HCT116 (cell line): ENCODE measurements at regions of chr2 and their contacts with region 1.

Region 1: DNA sequence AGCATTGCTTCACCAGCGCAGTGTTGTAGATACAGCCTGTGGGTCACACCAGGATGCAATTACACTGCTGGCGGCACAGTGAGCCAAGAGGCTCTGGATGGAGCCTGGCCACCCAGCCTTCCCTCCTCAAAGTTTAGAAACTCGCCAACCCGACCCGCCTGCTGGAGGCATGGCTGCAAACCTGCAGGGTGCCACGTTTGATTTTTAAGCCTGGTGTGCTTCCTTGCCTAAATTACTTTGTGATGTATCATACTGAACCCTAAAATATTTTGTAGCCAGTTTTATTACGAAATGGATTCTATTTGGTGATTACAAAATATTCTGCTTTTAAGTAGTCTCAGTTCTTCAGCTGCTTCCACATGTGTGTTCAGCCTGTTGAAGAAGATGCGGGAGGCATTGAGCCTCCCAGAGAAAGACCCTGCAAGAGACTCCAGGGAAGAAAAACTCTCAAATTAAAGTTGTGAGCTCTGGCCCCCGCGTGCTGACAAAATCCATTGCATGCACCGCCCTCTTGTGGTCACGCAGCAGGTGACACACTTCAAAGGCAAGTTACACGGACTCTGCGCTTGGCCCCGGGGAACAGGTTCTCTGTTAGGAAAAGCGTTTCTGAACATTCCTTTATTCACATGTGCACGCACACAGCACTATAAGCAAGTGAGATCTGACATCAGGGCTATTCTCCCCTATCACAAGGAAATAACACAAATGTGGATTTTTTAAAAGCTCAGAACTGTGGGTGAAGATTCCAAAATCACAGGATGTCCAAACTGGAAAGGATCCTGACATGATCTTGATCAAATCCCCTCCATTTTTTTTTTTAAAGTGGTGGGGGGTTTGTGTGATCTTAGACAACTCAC is 63.0 kb upstream of the TWIST2 start:
- DNase-seq: peak; percentile 49
- ATAC-seq: peak; percentile 95
- H3K4me3 ChIP-seq: no peak overlapping the region
- H3K27ac ChIP-seq: no peak overlapping the region
- H3K4me1 ChIP-seq: peaks cover 0 to 7% of the 10 kb centered on the region in 2 experiments; a peak in 1 of 4 replicates
- H3K27me3 ChIP-seq: no peaks in the 10 kb centered on the region
- CTCF ChIP-seq: peak; percentile 86 to 94 (median 86)
- POLR2A ChIP-seq: no peak
- RAD21 ChIP-seq: peak; percentile 92

Region 2: GRCh38 chr2:238513346-238513745 is 271.6 kb before region 1 on chr2:
- CTCF ChIA-PET with region 1: interaction called, 11 read pairs
- POLR2A ChIA-PET with region 1: no interaction called
- RAD21 ChIA-PET with region 1: interaction called in 1 of 2 experiments, 6 read pairs
- intact Hi-C with region 1: loop called (anchors 1 kb)
- DNase-seq: peak; percentile 42
- ATAC-seq: peak; percentile 95
- H3K4me3 ChIP-seq: no peak overlapping the region
- H3K27ac ChIP-seq: no peak overlapping the region
- H3K4me1 ChIP-seq: no peaks in the 10 kb centered on the region
- H3K27me3 ChIP-seq: no peaks in the 10 kb centered on the region
- CTCF ChIP-seq: peak; percentile 73 to 83 (median 73)
- POLR2A ChIP-seq: no peak
- RAD21 ChIP-seq: peak; percentile 85

Region 3: DNA sequence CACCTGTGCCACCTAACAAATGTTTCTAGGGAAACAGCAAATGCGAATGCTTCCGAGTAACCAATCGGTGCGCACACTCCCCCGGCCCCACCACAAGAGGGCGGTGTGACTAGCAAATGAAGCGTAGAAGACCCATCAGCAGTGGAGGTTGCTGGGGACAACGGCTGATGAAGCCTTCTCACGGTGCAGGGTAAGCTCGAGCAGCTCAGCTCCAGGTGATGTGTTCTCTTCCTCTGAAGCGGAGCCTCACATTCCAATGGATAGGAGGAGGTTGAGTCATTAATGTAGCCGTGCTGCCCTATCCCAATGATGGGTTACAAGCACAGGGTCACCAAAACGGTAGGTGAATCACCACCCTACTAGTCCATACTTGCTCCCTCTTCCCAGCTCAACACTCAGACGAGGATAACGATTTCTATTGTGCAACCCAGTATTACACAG is 64.6 kb before region 1 on chr2:
- CTCF ChIA-PET with region 1: interaction called, 5 read pairs
- POLR2A ChIA-PET with region 1: no interaction called
- RAD21 ChIA-PET with region 1: no interaction called
- intact Hi-C with region 1: loop called (anchors 1 kb)
- DNase-seq: peak; percentile 52
- ATAC-seq: peak; percentile 100
- H3K4me3 ChIP-seq: no peak overlapping the region
- H3K27ac ChIP-seq: no peak overlapping the region
- H3K4me1 ChIP-seq: peaks cover 0 to 4% of the 10 kb centered on the region in 2 experiments; a peak in 1 of 4 replicates
- H3K27me3 ChIP-seq: no peaks in the 10 kb centered on the region
- CTCF ChIP-seq: peak; percentile 73 to 97 (median 94)
- POLR2A ChIP-seq: no peak
- RAD21 ChIP-seq: peak; percentile 80

Region 4: DNA sequence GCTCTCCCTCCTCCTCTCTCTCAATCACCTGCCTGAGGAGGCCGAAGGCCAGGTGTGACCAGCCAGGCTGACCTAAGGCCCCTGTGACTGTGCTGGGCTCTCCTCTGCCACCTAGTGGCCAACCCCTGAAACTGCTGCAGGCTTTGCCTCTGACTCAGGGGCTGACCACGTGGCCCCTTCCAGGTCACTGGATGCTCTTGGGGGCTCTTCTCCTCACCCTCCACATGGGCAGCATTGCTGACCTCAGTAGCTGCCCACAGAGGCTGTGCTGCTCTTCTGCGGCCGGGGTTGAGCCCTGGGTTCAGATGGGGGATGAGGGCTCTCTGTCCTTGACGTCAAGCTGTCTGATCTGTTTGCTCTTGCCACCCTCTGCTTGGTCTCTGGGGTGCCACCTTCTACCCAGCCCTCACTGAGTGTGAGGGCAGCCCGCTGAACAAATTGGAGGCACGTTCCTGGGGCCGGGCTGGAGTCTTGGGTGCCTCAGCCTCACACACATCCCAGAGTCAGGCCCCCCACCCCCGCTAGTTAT is 185.7 kb after region 1 on chr2:
- CTCF ChIA-PET with region 1: interaction called, 4 read pairs
- POLR2A ChIA-PET with region 1: no interaction called
- RAD21 ChIA-PET with region 1: no interaction called
- intact Hi-C with region 1: loop called (anchors 2 kb)
- DNase-seq: peak; percentile 33
- ATAC-seq: peak; percentile 93
- H3K4me3 ChIP-seq: no peak overlapping the region
- H3K27ac ChIP-seq: no peak overlapping the region
- H3K4me1 ChIP-seq: peaks cover 0 to 15% of the 10 kb centered on the region in 2 experiments; a peak in 2 of 4 replicates
- H3K27me3 ChIP-seq: no peaks in the 10 kb centered on the region
- CTCF ChIP-seq: peak; percentile 84 to 99 (median 98)
- POLR2A ChIP-seq: no peak
- RAD21 ChIP-seq: peak; percentile 93